Caco-2 (cell line): ENCODE measurements at regions of chr7 and their contacts with region 1.

Region 1: DNA sequence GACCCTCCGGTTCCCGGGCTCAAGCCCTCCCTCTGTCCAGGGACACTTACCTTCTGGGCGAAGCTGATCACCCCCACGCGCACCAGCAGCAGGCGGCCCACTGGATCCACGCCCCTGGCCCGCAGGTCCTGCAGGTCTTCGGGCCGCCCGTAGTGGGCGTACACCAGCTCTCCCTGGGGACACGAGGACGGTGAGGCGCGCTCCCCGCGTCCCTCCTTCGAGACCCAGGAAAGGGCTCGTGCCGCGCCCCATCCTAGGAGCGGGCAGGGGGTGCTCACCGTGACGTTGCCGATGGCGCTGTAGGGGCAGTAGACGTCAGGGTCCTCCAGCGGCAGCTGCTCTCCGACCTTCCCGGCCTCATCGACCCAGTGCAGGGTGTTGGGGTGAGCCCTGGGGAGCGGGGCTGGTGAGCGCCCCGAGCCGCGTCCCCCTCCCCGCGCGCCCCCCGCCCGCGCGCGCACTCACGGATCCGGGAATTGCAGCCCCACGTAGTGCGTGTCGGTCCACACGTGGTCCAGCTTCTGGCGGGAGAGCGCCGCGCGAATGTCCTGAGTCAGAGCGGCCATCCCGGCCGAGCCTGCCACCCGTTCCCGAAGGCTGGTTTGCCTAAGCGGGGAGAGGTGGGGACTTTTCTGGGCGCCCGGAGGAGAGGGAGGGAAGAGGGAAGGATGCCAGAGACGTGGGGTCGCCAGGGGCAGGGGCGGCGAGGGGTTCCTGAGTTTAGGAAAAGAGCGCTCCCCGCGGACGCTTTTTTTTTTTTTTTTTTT is 8.2 kb downstream of the TFR2 start:
- DNase-seq: peak; percentile 85 to 86
- H3K4me3 ChIP-seq: peak overlapping the region; percentile 52
- H3K4me3 Mint-ChIP-seq: peak overlapping the region; percentile 79
- H3K27ac Mint-ChIP-seq: peak overlapping the region; percentile 92
- H3K4me1 ChIP-seq: no peaks in the 10 kb centered on the region
- H3K4me1 Mint-ChIP-seq: no peaks in the 10 kb centered on the region
- H3K27me3 ChIP-seq: no peaks in the 10 kb centered on the region
- H3K27me3 Mint-ChIP-seq: no peaks in the 10 kb centered on the region
- CTCF ChIP-seq: peak; percentile 67 to 70

Region 2: DNA sequence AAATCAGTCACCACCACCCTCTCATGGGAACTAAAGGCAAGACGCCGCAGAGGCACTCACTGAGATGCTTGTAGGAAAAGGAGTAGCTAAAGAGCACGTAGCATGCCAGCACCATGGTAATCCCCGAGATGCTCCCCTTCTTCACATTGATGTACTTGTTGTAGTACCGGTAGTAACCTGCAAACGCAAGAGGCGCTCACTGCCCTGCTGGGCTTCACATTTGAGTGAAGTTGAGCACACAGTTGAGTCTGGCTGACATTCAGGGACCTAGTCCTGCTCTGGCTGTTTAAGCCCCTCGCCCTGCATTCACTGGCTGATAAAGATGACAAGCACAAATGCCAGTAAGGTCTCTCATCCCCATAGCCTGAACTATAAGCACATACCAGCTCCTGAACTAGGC is 1174.0 kb before region 1 on chr7:
- CTCF ChIA-PET with region 1: no interaction called
- POLR2A ChIA-PET with region 1: no interaction called
- intact Hi-C with region 1: no loop called
- DNase-seq: peak; percentile 49 to 59
- H3K4me3 ChIP-seq: no peak overlapping the region
- H3K4me3 Mint-ChIP-seq: no peak overlapping the region
- H3K27ac Mint-ChIP-seq: peak overlapping the region; percentile 51
- H3K4me1 ChIP-seq: no peaks in the 10 kb centered on the region
- H3K4me1 Mint-ChIP-seq: peaks cover 16% of the 10 kb centered on the region
- H3K27me3 ChIP-seq: no peaks in the 10 kb centered on the region
- H3K27me3 Mint-ChIP-seq: no peaks in the 10 kb centered on the region
- CTCF ChIP-seq: peak; percentile 37 to 43

Region 3: DNA sequence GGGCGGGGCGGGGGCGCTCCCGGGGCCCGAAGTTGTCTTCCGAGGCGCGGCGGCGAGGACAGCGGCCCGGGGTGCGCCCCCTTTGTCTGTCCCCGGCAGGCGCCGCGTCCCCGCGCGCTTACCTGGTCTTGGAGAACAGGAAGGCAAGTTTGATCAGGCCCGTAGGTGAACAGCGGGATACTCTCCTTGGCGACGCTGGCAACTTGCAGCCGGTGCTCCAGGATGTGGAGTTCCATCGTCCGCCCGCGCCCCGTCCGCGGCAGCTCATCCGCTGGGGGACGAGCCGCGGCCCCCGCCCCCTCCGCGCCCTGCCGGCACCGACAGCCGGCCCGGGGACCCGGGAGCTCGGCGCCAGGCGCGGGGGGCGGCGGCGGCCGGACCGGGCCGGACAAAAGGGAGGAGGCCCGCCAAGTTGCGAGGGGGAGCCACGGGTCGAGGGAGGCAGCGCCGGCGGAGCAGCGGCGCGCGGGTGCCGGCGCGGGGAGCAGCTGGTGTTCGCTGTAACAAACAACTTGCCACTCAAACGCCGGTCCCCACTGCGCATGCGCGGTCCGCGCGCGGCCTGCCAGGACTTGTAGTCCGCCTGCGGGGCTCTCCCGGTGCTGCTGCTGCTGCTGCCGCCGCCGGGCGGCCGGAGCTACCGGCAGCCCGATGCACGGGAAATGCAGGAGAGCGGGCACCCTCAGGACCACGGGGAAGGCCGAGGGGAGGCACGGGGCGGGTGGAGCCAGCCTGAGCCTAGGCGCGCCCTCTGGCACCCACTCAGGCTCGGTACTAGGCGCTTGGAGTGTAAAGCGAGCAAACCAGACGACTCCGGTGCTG is 361.2 kb before region 1 on chr7:
- CTCF ChIA-PET with region 1: interaction called, 10 read pairs
- POLR2A ChIA-PET with region 1: no interaction called
- intact Hi-C with region 1: no loop called
- DNase-seq: peak; percentile 98
- H3K4me3 ChIP-seq: peak overlapping the region; percentile 62
- H3K4me3 Mint-ChIP-seq: peak overlapping the region; percentile 69
- H3K27ac Mint-ChIP-seq: no peak overlapping the region
- H3K4me1 ChIP-seq: peaks cover 20% of the 10 kb centered on the region
- H3K4me1 Mint-ChIP-seq: peaks cover 10% of the 10 kb centered on the region
- H3K27me3 ChIP-seq: no peaks in the 10 kb centered on the region
- H3K27me3 Mint-ChIP-seq: no peaks in the 10 kb centered on the region
- CTCF ChIP-seq: peak in 1 of 2 experiments; percentile 60

Region 4: DNA sequence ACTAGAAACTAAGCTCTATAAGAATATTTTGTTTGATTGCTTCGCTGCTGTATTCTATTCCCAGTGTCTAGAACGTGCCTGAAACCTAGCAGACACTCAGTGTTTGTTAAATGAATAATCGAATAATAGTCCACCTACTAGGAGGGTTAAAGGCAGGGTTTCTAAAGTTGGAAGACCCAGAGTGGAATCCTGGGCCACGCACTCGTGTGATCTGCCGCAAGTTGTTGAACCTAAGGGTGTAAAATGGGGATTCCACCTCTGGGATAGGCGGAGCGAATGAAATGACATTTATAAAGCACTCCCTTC is 94.8 kb before region 1 on chr7:
- CTCF ChIA-PET with region 1: no interaction called
- POLR2A ChIA-PET with region 1: no interaction called
- intact Hi-C with region 1: no loop called
- DNase-seq: no peak
- H3K4me3 ChIP-seq: peak overlapping the region; percentile 49
- H3K4me3 Mint-ChIP-seq: peak overlapping the region; percentile 87
- H3K27ac Mint-ChIP-seq: peak overlapping the region; percentile 72
- H3K4me1 ChIP-seq: peaks cover 31% of the 10 kb centered on the region
- H3K4me1 Mint-ChIP-seq: peaks cover 17% of the 10 kb centered on the region
- H3K27me3 ChIP-seq: no peaks in the 10 kb centered on the region
- H3K27me3 Mint-ChIP-seq: no peaks in the 10 kb centered on the region
- CTCF ChIP-seq: no peak

Region 5: GRCh38 chr7:100604028-100604975 is 28.8 kb before region 1 on chr7:
- CTCF ChIA-PET with region 1: interaction called, 9 read pairs
- POLR2A ChIA-PET with region 1: interaction called, 4 read pairs
- intact Hi-C with region 1: loop called (anchors 2 kb)
- DNase-seq: peak; percentile 86 to 89
- H3K4me3 ChIP-seq: peak overlapping the region; percentile 67
- H3K4me3 Mint-ChIP-seq: peak overlapping the region; percentile 91
- H3K27ac Mint-ChIP-seq: peak overlapping the region; percentile 74
- H3K4me1 ChIP-seq: peaks cover 16% of the 10 kb centered on the region
- H3K4me1 Mint-ChIP-seq: no peaks in the 10 kb centered on the region
- H3K27me3 ChIP-seq: no peaks in the 10 kb centered on the region
- H3K27me3 Mint-ChIP-seq: no peaks in the 10 kb centered on the region
- CTCF ChIP-seq: peak; percentile 54 to 74

Region 6: DNA sequence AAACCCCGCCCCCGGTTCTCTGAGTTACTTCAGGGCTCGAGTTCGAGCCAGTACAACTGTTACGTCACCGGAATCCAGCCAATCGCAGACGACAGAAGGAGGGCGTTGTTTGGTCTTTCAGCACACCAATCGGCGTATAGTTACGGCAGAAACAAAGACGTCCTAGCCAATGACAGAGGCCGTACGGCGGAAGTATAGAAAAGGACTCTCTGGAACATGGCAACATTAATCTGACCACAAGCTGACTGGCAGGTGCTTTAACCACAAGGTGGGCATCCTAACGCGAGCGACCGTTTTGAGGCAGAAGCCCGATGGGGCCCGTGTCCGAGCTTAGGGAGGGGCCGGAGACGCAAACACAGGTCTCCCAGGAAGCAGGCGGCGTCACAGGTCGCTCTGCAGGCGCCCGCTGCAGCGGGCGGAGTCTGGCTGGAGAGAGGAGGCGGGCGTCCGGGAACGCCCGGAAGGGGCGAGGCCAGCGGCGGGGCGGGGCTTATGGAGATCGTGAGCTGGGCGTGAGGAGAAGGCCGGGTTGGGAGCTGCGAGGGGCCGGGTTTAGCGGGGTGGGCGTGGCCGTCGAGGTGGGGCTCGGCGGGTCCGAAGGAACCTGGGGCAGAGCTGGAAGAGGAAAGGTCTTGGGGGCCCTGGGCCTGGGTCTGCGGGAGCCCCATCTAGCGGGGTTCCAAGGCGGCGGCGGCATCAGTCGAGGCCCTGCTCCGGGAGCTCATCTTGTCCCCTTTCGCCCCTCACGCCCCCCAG is 21.0 kb before region 1 on chr7 and contains the start of gene MOSPD3:
- CTCF ChIA-PET with region 1: interaction called, 39 read pairs
- POLR2A ChIA-PET with region 1: interaction called, 13 read pairs
- intact Hi-C with region 1: no loop called
- DNase-seq: peak; percentile 99
- H3K4me3 ChIP-seq: peak within 1 kb of the TSS; percentile 50
- H3K4me3 Mint-ChIP-seq: peak within 1 kb of the TSS; percentile 86
- H3K27ac Mint-ChIP-seq: peak within 1 kb of the TSS; percentile 95
- H3K4me1 ChIP-seq: peaks cover 10% of the 10 kb centered on the region; the same call in 1 of the 2 replicates
- H3K4me1 Mint-ChIP-seq: no peaks in the 10 kb centered on the region
- H3K27me3 ChIP-seq: no peaks in the 10 kb centered on the region
- H3K27me3 Mint-ChIP-seq: no peaks in the 10 kb centered on the region
- CTCF ChIP-seq: no peak
- total RNA-seq, gene MOSPD3: 24.6 and 24.7 TPM in 2 replicates

Region 7: GRCh38 chr7:100649826-100650547 is 16.9 kb after region 1 on chr7:
- CTCF ChIA-PET with region 1: interaction called, 14 read pairs
- POLR2A ChIA-PET with region 1: no interaction called
- intact Hi-C with region 1: no loop called
- DNase-seq: peak; percentile 71 to 73
- H3K4me3 ChIP-seq: no peak overlapping the region
- H3K4me3 Mint-ChIP-seq: no peak overlapping the region
- H3K27ac Mint-ChIP-seq: no peak overlapping the region
- H3K4me1 ChIP-seq: peaks cover 6% of the 10 kb centered on the region
- H3K4me1 Mint-ChIP-seq: peaks cover 7% of the 10 kb centered on the region
- H3K27me3 ChIP-seq: no peaks in the 10 kb centered on the region
- H3K27me3 Mint-ChIP-seq: no peaks in the 10 kb centered on the region
- CTCF ChIP-seq: no peak

Region 8: GRCh38 chr7:100673300-100673941 is 40.3 kb after region 1 on chr7 and contains the start of gene GNB2:
- CTCF ChIA-PET with region 1: interaction called, 10 read pairs
- POLR2A ChIA-PET with region 1: interaction called, 3 read pairs
- intact Hi-C with region 1: loop called (anchors 1 kb)
- DNase-seq: peak; percentile 100
- H3K4me3 ChIP-seq: peak within 1 kb of the TSS; percentile 100
- H3K4me3 Mint-ChIP-seq: peak within 1 kb of the TSS; percentile 85
- H3K27ac Mint-ChIP-seq: peak within 1 kb of the TSS; percentile 94
- H3K4me1 ChIP-seq: no peaks in the 10 kb centered on the region
- H3K4me1 Mint-ChIP-seq: no peaks in the 10 kb centered on the region
- H3K27me3 ChIP-seq: no peaks in the 10 kb centered on the region
- H3K27me3 Mint-ChIP-seq: no peaks in the 10 kb centered on the region
- CTCF ChIP-seq: no peak
- total RNA-seq, gene GNB2: 200 and 216 TPM in 2 replicates

Region 9: DNA sequence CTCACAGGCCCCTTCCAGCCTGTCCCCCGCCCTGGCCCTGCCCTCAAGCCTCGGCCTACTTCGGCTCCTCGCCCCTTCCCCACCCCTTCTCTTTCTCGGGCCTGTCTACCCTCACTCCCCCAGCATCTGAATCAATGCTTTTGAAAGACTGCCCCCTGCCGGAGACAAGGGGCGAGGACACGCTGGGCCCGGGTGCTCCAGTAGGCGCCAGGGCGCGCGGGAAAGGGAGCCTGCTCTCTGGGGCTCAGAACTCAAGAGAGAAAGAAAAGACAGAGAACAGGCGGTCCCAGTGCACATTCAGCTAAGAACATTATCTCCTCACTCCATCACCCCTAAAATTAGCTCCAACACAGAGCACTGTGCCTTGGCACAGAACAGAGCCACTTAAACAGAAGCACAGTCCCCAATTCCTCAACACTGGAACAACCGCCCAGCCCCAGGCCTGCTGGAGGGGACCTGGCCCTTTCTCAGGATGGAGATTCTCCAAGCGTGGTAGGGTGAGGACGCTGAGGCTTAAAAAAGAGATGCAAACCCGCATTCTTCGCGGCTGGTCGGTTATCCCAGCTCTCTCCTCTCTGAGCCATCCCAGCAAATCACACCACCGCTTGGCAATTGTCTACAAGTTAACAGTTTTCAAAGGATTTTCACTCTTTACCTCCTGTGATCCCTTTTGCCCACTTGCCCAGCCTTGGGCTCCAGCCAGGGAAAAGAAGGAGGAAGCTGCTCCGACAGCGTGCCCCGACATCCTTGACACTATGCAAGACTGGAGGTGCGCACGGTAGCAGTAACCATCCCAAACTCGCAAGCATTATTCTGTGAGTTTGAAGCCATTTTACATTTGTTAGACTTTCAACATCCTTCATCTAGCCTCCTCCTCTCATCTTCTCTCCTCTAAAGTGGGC is 58.8 kb after region 1 on chr7:
- CTCF ChIA-PET with region 1: interaction called, 6 read pairs
- POLR2A ChIA-PET with region 1: interaction called, 3 read pairs
- intact Hi-C with region 1: loop called (anchors 5 kb)
- DNase-seq: peak in 1 of 2 experiments; percentile 77
- H3K4me3 ChIP-seq: peak overlapping the region; percentile 55
- H3K4me3 Mint-ChIP-seq: peak overlapping the region; percentile 96
- H3K27ac Mint-ChIP-seq: no peak overlapping the region
- H3K4me1 ChIP-seq: peaks cover 19% of the 10 kb centered on the region
- H3K4me1 Mint-ChIP-seq: peaks cover 18% of the 10 kb centered on the region
- H3K27me3 ChIP-seq: no peaks in the 10 kb centered on the region
- H3K27me3 Mint-ChIP-seq: no peaks in the 10 kb centered on the region
- CTCF ChIP-seq: peak; percentile 68 to 77

Region 10: DNA sequence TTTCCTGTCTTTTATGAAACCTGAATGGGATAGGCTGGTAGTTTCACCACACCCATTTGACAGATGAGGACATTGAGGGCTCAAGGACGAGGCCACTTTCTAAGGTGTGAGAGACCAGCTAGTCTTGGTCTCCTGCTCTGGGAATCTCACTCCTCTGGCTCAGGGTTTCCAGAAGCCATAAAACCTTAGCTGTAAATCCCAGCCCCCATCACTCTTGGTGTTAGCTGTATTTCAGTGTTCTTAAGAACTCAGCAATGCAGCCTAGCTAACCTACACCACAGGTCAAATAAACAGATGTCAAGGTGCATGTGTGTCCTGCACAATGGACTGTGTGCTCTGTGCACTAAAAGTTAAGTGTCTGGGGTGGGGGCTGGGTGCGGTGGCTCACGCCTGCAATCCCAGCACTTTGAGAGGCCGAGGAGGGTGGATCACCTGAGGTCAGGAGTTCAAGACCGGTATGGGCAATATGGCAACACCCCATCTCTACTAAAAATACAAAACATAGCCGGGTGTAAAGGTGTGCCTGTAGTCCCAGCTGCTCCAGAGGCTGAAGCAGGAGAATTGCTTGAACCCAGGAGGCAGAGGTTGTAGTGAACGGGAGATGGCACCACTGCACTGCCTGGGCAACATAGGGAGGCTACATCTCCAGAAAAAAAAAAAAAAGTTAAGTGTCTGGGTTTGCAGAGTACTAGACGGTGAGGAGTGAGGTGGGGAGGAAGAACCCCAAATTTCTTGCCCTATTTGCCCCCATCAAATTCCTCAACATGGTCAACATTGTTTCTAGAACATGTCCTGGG is 86.6 kb after region 1 on chr7:
- CTCF ChIA-PET with region 1: no interaction called
- POLR2A ChIA-PET with region 1: no interaction called
- intact Hi-C with region 1: no loop called
- DNase-seq: peak; percentile 31 to 71
- H3K4me3 ChIP-seq: peak overlapping the region; percentile 47
- H3K4me3 Mint-ChIP-seq: peak overlapping the region; percentile 65
- H3K27ac Mint-ChIP-seq: no peak overlapping the region
- H3K4me1 ChIP-seq: peaks cover 9% of the 10 kb centered on the region
- H3K4me1 Mint-ChIP-seq: peaks cover 7% of the 10 kb centered on the region
- H3K27me3 ChIP-seq: no peaks in the 10 kb centered on the region
- H3K27me3 Mint-ChIP-seq: no peaks in the 10 kb centered on the region
- CTCF ChIP-seq: no peak

Region 11: GRCh38 chr7:101235050-101235449 is 601.9 kb after region 1 on chr7:
- CTCF ChIA-PET with region 1: no interaction called
- POLR2A ChIA-PET with region 1: no interaction called
- intact Hi-C with region 1: no loop called
- DNase-seq: peak in 1 of 2 experiments; percentile 41
- H3K4me3 ChIP-seq: no peak overlapping the region
- H3K4me3 Mint-ChIP-seq: peak overlapping the region; percentile 44
- H3K27ac Mint-ChIP-seq: no peak overlapping the region
- H3K4me1 ChIP-seq: peaks cover 21% of the 10 kb centered on the region
- H3K4me1 Mint-ChIP-seq: peaks cover 26% of the 10 kb centered on the region
- H3K27me3 ChIP-seq: no peaks in the 10 kb centered on the region
- H3K27me3 Mint-ChIP-seq: no peaks in the 10 kb centered on the region
- CTCF ChIP-seq: peak; percentile 17 to 23